OCI-LY7 (cell line): ENCODE measurements at regions of chr13 and their contacts with region 1.

Region 1: GRCh38 chr13:39510316-39510695 is 92.7 kb downstream of the LHFPL6 start:
- DNase-seq: peak; percentile 85
- H3K4me3 ChIP-seq: peak overlapping the region; percentile 54
- H3K27ac ChIP-seq: peak overlapping the region; percentile 80
- H3K4me1 ChIP-seq: peaks cover 45% of the 10 kb centered on the region
- CTCF ChIP-seq: peak; percentile 31; the same call in 1 of the 2 replicates

Region 2: GRCh38 chr13:39051157-39051556 is 459.1 kb before region 1 on chr13:
- CTCF ChIA-PET with region 1: no interaction called
- POLR2A ChIA-PET with region 1: no interaction called
- intact Hi-C with region 1: no loop called
- DNase-seq: peak; percentile 60
- H3K4me3 ChIP-seq: no peak overlapping the region
- H3K27ac ChIP-seq: no peak overlapping the region
- H3K4me1 ChIP-seq: no peaks in the 10 kb centered on the region
- CTCF ChIP-seq: peak; percentile 75

Region 3: GRCh38 chr13:39586151-39586550 is 75.8 kb after region 1 on chr13:
- CTCF ChIA-PET with region 1: no interaction called
- POLR2A ChIA-PET with region 1: interaction called, 8 read pairs
- intact Hi-C with region 1: loop called (anchors 5 kb)
- DNase-seq: peak; percentile 91
- H3K4me3 ChIP-seq: peak overlapping the region; percentile 56
- H3K27ac ChIP-seq: peak overlapping the region; percentile 99
- H3K4me1 ChIP-seq: peaks cover 99% of the 10 kb centered on the region
- CTCF ChIP-seq: no peak

Region 4: DNA sequence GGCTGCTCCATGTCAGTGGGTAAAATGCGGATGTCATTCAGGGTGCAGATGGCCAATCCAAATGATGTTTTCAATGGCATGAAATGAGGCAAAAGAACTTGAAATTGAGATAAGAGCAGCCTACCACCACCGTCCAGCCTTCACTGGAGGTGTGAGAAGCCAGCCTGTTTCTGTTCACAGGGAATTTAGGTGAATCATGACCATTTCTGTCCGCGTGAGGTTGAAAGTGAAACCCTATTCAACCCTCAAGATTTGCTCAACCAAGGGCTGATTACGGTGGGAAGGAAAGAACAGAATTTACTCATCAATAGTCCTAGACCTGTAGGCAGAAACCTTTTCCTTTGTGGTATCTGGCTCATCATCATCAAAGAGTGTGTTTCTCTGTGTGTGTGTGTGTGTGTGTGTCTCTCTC is 515.9 kb after region 1 on chr13:
- CTCF ChIA-PET with region 1: no interaction called
- POLR2A ChIA-PET with region 1: no interaction called
- intact Hi-C with region 1: no loop called
- DNase-seq: no peak
- H3K4me3 ChIP-seq: no peak overlapping the region
- H3K27ac ChIP-seq: no peak overlapping the region
- H3K4me1 ChIP-seq: peaks cover 12% of the 10 kb centered on the region
- CTCF ChIP-seq: no peak